CD4-positive, alpha-beta T cell (primary cell): ENCODE measurements at regions of chr2 and their contacts with region 1.

Region 1: GRCh38 chr2:197804049-197804757 is at the start of gene PLCL1:
- DNase-seq: peak; percentile 82 to 95 (median 90)
- ATAC-seq: peak; percentile 96
- H3K4me3 ChIP-seq: peak within 1 kb of the TSS; percentile 77
- H3K4me3 Mint-ChIP-seq: peak within 1 kb of the TSS; percentile 96
- H3K27ac ChIP-seq: peak within 1 kb of the TSS in 1 of 2 donors; percentile 68
- H3K27ac Mint-ChIP-seq: peak within 1 kb of the TSS; percentile 87
- H3K4me1 ChIP-seq: peaks cover 29% of the 10 kb centered on the region
- H3K4me1 Mint-ChIP-seq: peaks cover 55% of the 10 kb centered on the region
- H3K27me3 ChIP-seq: no peaks in the 10 kb centered on the region
- H3K27me3 Mint-ChIP-seq: no peaks in the 10 kb centered on the region
- CTCF ChIP-seq: no peak
- total RNA-seq, gene PLCL1: 27.0 to 28.3 TPM

Region 2: GRCh38 chr2:197838036-197838435 is 33.8 kb after region 1 on chr2:
- CTCF ChIA-PET with region 1: interaction called, 4 read pairs
- POLR2A ChIA-PET with region 1: interaction called, 13 read pairs
- intact Hi-C with region 1: loop called (anchors 2 to 5 kb)
- DNase-seq: peak in 5 of 14 experiments; percentile 8 to 74 (median 66)
- ATAC-seq: peak; percentile 87
- H3K4me3 ChIP-seq: peak overlapping the region; percentile 4
- H3K4me3 Mint-ChIP-seq: peak overlapping the region; percentile 87
- H3K27ac ChIP-seq: peak overlapping the region; percentile 6 to 47
- H3K27ac Mint-ChIP-seq: peak overlapping the region; percentile 95
- H3K4me1 ChIP-seq: peaks cover 20% of the 10 kb centered on the region
- H3K4me1 Mint-ChIP-seq: peaks cover 73% of the 10 kb centered on the region
- H3K27me3 ChIP-seq: no peaks in the 10 kb centered on the region
- H3K27me3 Mint-ChIP-seq: no peaks in the 10 kb centered on the region
- CTCF ChIP-seq: no peak

Region 3: DNA sequence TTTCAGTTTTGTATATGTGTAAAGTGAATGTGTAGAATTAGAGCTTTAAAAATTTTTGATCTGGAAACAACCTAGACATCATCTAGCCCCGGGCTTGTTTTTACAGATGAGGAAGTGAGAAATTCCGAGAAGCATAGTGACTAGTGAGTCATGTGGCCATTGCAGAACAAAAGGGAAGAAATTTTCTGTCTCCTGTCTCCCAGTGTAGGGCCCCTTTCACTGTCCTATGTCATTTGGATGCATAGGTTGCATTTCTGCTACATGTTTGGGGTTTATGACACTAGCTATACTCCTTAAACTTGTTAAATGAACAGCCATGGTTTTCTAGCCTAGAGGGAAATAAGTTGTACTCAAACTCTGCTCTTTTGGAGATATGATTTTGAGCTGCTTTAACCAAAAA is 84.8 kb after region 1 on chr2:
- CTCF ChIA-PET with region 1: interaction called, 3 read pairs
- POLR2A ChIA-PET with region 1: interaction called, 9 read pairs
- intact Hi-C with region 1: loop called in 1 of 2 experiments (anchors 5 kb)
- DNase-seq: peak in 7 of 14 experiments; percentile 21 to 78 (median 44)
- ATAC-seq: peak; percentile 85
- H3K4me3 ChIP-seq: no peak overlapping the region
- H3K4me3 Mint-ChIP-seq: peak overlapping the region; percentile 64
- H3K27ac ChIP-seq: peak overlapping the region in 1 of 2 donors; percentile 6
- H3K27ac Mint-ChIP-seq: peak overlapping the region; percentile 90
- H3K4me1 ChIP-seq: peaks cover 28% of the 10 kb centered on the region
- H3K4me1 Mint-ChIP-seq: peaks cover 79% of the 10 kb centered on the region
- H3K27me3 ChIP-seq: no peaks in the 10 kb centered on the region
- H3K27me3 Mint-ChIP-seq: no peaks in the 10 kb centered on the region
- CTCF ChIP-seq: no peak

Region 4: GRCh38 chr2:197952540-197953202 is 148.5 kb after region 1 on chr2:
- CTCF ChIA-PET with region 1: no interaction called
- POLR2A ChIA-PET with region 1: no interaction called
- intact Hi-C with region 1: loop called in 1 of 2 experiments (anchors 1 kb)
- DNase-seq: peak in 1 of 14 experiments; percentile 16
- ATAC-seq: no peak
- H3K4me3 ChIP-seq: no peak overlapping the region
- H3K4me3 Mint-ChIP-seq: peak overlapping the region; percentile 7
- H3K27ac ChIP-seq: no peak overlapping the region
- H3K27ac Mint-ChIP-seq: peak overlapping the region; percentile 80
- H3K4me1 ChIP-seq: no peaks in the 10 kb centered on the region
- H3K4me1 Mint-ChIP-seq: peaks cover 94% of the 10 kb centered on the region
- H3K27me3 ChIP-seq: no peaks in the 10 kb centered on the region
- H3K27me3 Mint-ChIP-seq: no peaks in the 10 kb centered on the region
- CTCF ChIP-seq: no peak

Region 5: GRCh38 chr2:197965756-197966155 is 161.6 kb after region 1 on chr2:
- CTCF ChIA-PET with region 1: no interaction called
- POLR2A ChIA-PET with region 1: no interaction called
- intact Hi-C with region 1: no loop called
- DNase-seq: no peak
- ATAC-seq: no peak
- H3K4me3 ChIP-seq: no peak overlapping the region
- H3K4me3 Mint-ChIP-seq: no peak overlapping the region
- H3K27ac ChIP-seq: no peak overlapping the region
- H3K27ac Mint-ChIP-seq: no peak overlapping the region
- H3K4me1 ChIP-seq: no peaks in the 10 kb centered on the region
- H3K4me1 Mint-ChIP-seq: peaks cover 31% of the 10 kb centered on the region
- H3K27me3 ChIP-seq: no peaks in the 10 kb centered on the region
- H3K27me3 Mint-ChIP-seq: no peaks in the 10 kb centered on the region
- CTCF ChIP-seq: no peak

Region 6: DNA sequence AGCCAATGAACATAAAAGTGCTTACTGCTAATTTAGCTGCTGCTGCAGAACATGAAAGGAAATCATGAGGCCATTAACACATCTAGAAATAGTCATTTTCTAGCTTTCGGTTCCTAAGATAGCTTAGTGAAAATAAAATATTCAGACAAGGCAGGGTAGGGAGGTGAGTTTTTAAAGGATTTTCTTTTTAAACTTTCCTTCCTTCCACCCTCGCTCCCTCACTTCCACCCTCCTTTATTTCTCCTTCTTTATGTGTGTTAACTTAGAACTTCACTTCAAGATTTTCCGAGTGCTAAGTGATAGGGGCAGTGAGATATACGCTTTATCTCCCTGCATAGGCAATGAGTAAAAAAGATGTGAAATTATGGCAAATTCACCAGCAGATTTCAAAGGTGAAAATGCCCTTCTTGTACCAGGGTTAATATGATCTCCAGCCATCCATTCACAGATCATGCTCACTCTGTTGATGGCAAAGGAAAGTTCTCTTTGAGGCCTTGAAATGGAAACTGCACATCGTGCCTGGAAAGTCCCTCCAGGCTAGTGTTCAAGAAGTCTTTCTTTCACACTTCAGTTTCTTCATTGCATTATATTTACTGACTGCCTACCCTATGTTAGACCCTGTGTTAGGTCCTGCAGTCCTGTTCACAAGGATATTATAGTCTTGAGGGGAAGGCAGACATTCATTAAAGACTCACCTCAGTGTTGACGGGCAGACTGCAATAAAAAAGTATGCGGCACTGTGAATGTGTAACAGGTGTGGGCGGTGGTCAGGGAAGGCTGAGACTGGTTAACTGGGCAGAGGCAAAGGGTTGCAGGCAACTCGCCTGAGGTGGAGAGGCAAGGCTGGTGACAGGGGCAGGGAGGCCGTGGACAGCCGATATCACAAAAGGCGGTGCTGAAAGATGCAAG is 201.0 kb after region 1 on chr2:
- CTCF ChIA-PET with region 1: interaction called, 3 read pairs
- POLR2A ChIA-PET with region 1: no interaction called
- intact Hi-C with region 1: loop called in 1 of 2 experiments (anchors 5 kb)
- DNase-seq: peak in 3 of 14 experiments; percentile 44 to 66 (median 61)
- ATAC-seq: peak; percentile 79
- H3K4me3 ChIP-seq: peak overlapping the region; percentile 31
- H3K4me3 Mint-ChIP-seq: peak overlapping the region; percentile 47
- H3K27ac ChIP-seq: peak overlapping the region in 1 of 2 donors; percentile 38
- H3K27ac Mint-ChIP-seq: peak overlapping the region; percentile 83
- H3K4me1 ChIP-seq: peaks cover 3% of the 10 kb centered on the region
- H3K4me1 Mint-ChIP-seq: peaks cover 74% of the 10 kb centered on the region
- H3K27me3 ChIP-seq: no peaks in the 10 kb centered on the region
- H3K27me3 Mint-ChIP-seq: no peaks in the 10 kb centered on the region
- CTCF ChIP-seq: no peak

Region 7: GRCh38 chr2:198127627-198128026 is 323.4 kb after region 1 on chr2:
- CTCF ChIA-PET with region 1: interaction called, 10 read pairs
- POLR2A ChIA-PET with region 1: interaction called, 11 read pairs
- intact Hi-C with region 1: loop called (anchors 1 kb)
- DNase-seq: peak; percentile 12 to 76 (median 40)
- ATAC-seq: peak; percentile 77
- H3K4me3 ChIP-seq: no peak overlapping the region
- H3K4me3 Mint-ChIP-seq: no peak overlapping the region
- H3K27ac ChIP-seq: no peak overlapping the region
- H3K27ac Mint-ChIP-seq: no peak overlapping the region
- H3K4me1 ChIP-seq: no peaks in the 10 kb centered on the region
- H3K4me1 Mint-ChIP-seq: peaks cover 6% of the 10 kb centered on the region
- H3K27me3 ChIP-seq: no peaks in the 10 kb centered on the region
- H3K27me3 Mint-ChIP-seq: no peaks in the 10 kb centered on the region
- CTCF ChIP-seq: peak; percentile 75

Region 8: DNA sequence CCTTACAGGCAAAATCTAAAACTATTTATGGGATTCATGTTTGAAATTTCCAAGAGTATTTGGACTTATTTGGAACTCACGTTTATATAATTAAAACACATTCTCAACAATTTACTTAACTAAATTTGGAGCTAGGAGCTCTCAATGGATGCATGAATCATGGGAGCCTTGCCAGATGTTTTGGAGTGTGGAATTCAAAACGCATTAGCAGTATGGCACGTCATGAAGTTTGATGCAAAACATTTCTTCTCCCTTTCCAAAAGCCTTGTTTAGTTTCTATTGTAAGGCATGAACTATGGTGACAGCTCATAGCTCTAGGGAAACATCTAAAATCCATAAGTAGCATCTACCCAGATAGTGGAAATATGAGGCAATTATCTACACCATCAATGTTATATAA is 952.0 kb after region 1 on chr2:
- CTCF ChIA-PET with region 1: no interaction called
- POLR2A ChIA-PET with region 1: no interaction called
- intact Hi-C with region 1: no loop called
- DNase-seq: no peak
- ATAC-seq: no peak
- H3K4me3 ChIP-seq: no peak overlapping the region
- H3K4me3 Mint-ChIP-seq: no peak overlapping the region
- H3K27ac ChIP-seq: no peak overlapping the region
- H3K27ac Mint-ChIP-seq: no peak overlapping the region
- H3K4me1 ChIP-seq: no peaks in the 10 kb centered on the region
- H3K4me1 Mint-ChIP-seq: no peaks in the 10 kb centered on the region
- H3K27me3 ChIP-seq: no peaks in the 10 kb centered on the region
- H3K27me3 Mint-ChIP-seq: peaks cover 3% of the 10 kb centered on the region
- CTCF ChIP-seq: no peak